Naive thymus-derived CD4-positive, alpha-beta T cell (primary cell): ENCODE measurements at regions of chr18 and their contacts with region 1.

Region 1: GRCh38 chr18:59402432-59403090 is 43.5 kb upstream of the LMAN1 start:
- DNase-seq: peak; percentile 39 to 75 (median 61)
- ATAC-seq: peak; percentile 93
- H3K4me3 ChIP-seq: no peak overlapping the region
- H3K4me3 Mint-ChIP-seq: no peak overlapping the region
- H3K27ac ChIP-seq: no peak overlapping the region
- H3K27ac Mint-ChIP-seq: no peak overlapping the region
- H3K4me1 ChIP-seq: no peaks in the 10 kb centered on the region
- H3K4me1 Mint-ChIP-seq: peaks cover 0 to 4% (median 0%) of the 10 kb centered on the region in 7 donors
- H3K27me3 ChIP-seq: no peaks in the 10 kb centered on the region
- H3K27me3 Mint-ChIP-seq: peaks cover 0 to 10% (median 0%) of the 10 kb centered on the region in 5 donors

Region 2: GRCh38 chr18:58781627-58782194 is 620.9 kb before region 1 on chr18:
- CTCF ChIA-PET with region 1: no interaction called
- POLR2A ChIA-PET with region 1: no interaction called
- intact Hi-C with region 1: loop called in 1 of 2 experiments (anchors 2 kb)
- DNase-seq: peak; percentile 28 to 73 (median 59)
- ATAC-seq: peak; percentile 83
- H3K4me3 ChIP-seq: no peak overlapping the region
- H3K4me3 Mint-ChIP-seq: no peak overlapping the region
- H3K27ac ChIP-seq: no peak overlapping the region
- H3K27ac Mint-ChIP-seq: no peak overlapping the region
- H3K4me1 ChIP-seq: no peaks in the 10 kb centered on the region
- H3K4me1 Mint-ChIP-seq: peaks cover 0 to 2% (median 0%) of the 10 kb centered on the region in 7 donors
- H3K27me3 ChIP-seq: no peaks in the 10 kb centered on the region
- H3K27me3 Mint-ChIP-seq: peaks cover 7 to 34% (median 23%) of the 10 kb centered on the region in 5 donors

Region 3: DNA sequence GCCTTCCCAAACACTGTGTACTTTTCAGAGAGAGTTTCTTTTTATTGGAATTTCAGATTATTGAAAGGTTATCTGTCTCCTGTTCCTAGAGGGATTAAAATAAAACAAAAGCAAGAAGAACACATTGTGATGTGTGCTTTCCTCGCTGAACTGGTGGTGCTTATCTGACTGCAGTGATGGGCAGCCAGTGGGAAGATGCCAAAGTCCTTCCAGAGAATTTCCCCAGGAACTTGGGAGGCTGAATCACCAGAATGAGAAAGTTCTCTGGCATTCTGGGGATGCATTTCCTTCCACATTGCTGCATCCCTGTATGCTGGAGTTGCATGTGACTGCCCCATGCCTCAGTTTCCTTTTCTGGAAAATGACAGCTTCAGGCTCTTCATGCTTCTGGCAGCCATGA is 316.8 kb before region 1 on chr18:
- CTCF ChIA-PET with region 1: interaction called, 6 read pairs
- POLR2A ChIA-PET with region 1: no interaction called
- intact Hi-C with region 1: loop called in 1 of 2 experiments (anchors 5 kb)
- DNase-seq: no peak
- ATAC-seq: no peak
- H3K4me3 ChIP-seq: no peak overlapping the region
- H3K4me3 Mint-ChIP-seq: no peak overlapping the region
- H3K27ac ChIP-seq: no peak overlapping the region
- H3K27ac Mint-ChIP-seq: no peak overlapping the region
- H3K4me1 ChIP-seq: peaks cover 0 to 8% of the 10 kb centered on the region in 2 donors
- H3K4me1 Mint-ChIP-seq: peaks cover 3 to 18% (median 13%) of the 10 kb centered on the region in 7 donors
- H3K27me3 ChIP-seq: peaks cover 0 to 4% of the 10 kb centered on the region in 2 donors
- H3K27me3 Mint-ChIP-seq: peaks cover 12 to 22% (median 20%) of the 10 kb centered on the region in 5 donors

Region 4: DNA sequence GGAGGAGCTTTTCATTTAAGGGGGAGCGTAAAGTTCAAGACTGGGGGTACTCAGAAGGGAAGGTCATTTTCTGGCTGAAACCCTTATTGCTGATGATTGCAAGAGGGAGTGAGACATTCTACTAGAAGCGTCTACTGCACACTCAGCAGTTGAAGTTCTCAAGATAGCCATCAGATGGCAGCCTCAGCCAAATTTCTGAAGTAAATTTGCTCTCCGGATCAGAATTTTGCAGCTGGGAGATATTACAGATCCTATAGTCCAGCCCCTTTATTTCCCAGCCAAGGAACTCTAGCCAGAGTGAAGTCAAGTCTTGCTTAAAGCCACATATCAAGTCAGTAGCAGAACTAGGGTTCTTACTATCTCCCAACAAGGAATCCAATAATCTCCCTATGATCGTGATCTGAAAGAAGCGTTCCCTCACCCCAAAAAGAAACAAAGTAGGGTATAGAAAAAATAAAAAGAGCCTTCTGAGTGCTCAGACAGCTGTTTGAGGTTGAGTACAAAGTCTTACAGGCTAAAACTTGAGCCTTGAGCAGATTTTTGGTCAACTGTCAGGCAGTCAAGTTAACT is 153.3 kb before region 1 on chr18:
- CTCF ChIA-PET with region 1: interaction called, 3 read pairs
- POLR2A ChIA-PET with region 1: no interaction called
- intact Hi-C with region 1: loop called in 1 of 2 experiments (anchors 2 kb)
- DNase-seq: peak in 3 of 9 donors; percentile 9 to 17 (median 16)
- ATAC-seq: no peak
- H3K4me3 ChIP-seq: no peak overlapping the region
- H3K4me3 Mint-ChIP-seq: no peak overlapping the region
- H3K27ac ChIP-seq: no peak overlapping the region
- H3K27ac Mint-ChIP-seq: no peak overlapping the region
- H3K4me1 ChIP-seq: no peaks in the 10 kb centered on the region
- H3K4me1 Mint-ChIP-seq: peaks cover 0 to 2% (median 0%) of the 10 kb centered on the region in 7 donors
- H3K27me3 ChIP-seq: no peaks in the 10 kb centered on the region
- H3K27me3 Mint-ChIP-seq: peaks cover 49 to 67% (median 63%) of the 10 kb centered on the region in 5 donors

Region 5: DNA sequence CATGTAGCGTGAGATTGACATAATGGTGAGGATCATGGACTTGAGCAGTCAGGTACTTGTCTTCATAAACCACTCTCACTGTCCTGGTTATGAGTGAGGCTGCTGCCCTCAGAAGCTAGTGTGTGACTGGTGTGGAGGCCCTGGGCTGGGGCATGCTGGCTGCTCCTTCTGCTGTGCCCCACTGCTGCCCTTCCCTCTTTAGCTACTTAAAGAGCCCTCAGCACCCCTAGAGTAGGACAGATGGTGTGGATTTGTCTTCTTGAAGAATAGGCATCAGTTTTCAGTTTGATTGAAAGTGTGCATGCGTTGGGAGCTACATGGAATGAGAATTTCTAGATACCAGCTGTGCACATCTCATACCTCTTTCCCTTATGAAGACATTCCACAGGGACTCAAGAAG is 99.6 kb before region 1 on chr18:
- CTCF ChIA-PET with region 1: interaction called, 68 read pairs
- POLR2A ChIA-PET with region 1: no interaction called
- intact Hi-C with region 1: loop called in 1 of 2 experiments (anchors 2 kb)
- DNase-seq: no peak
- ATAC-seq: no peak
- H3K4me3 ChIP-seq: no peak overlapping the region
- H3K4me3 Mint-ChIP-seq: no peak overlapping the region
- H3K27ac ChIP-seq: no peak overlapping the region
- H3K27ac Mint-ChIP-seq: no peak overlapping the region
- H3K4me1 ChIP-seq: no peaks in the 10 kb centered on the region
- H3K4me1 Mint-ChIP-seq: peaks cover 0 to 4% (median 0%) of the 10 kb centered on the region in 7 donors
- H3K27me3 ChIP-seq: no peaks in the 10 kb centered on the region
- H3K27me3 Mint-ChIP-seq: peaks cover 14 to 33% (median 28%) of the 10 kb centered on the region in 5 donors

Region 6: DNA sequence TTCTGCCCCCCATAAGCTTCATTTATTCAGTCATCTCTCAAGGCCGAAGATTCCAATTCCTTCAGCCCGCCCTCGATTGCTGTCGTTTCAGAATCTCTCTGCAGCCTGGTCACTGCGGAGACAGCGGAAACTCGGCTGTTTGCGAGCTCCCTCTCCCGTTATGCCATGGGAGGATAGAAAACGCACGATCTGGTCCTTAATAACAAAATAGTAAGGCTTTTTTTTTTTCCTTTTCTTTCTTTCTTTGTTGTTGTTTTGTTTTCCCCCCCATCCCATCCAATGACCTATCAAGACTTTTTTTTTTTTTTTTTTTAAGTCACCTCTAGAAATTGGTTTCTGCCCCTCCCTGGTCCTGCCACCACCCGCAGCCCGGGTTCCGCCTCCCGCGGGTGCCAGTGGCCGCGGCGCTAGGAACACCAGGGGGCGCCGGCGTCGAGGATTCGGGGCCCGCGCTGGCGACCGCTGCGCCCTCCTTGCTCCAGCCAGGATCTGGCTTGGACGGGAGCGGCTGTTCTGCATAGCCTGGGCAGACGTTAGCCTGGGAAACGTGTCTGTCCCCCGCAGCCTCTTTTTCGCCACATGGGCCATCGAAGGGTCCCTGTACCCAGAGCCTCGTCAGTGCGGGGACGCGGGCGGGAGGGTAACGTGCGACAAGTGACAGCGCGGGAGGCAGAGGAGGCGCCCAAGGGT is 94.2 kb before region 1 on chr18:
- CTCF ChIA-PET with region 1: interaction called, 68 read pairs
- POLR2A ChIA-PET with region 1: no interaction called
- intact Hi-C with region 1: loop called in 1 of 2 experiments (anchors 2 kb)
- DNase-seq: peak; percentile 23 to 84 (median 57)
- ATAC-seq: peak; percentile 89
- H3K4me3 ChIP-seq: peak overlapping the region; percentile 56
- H3K4me3 Mint-ChIP-seq: peak overlapping the region in 9 of 10 donors; percentile 23 to 76 (median 61)
- H3K27ac ChIP-seq: no peak overlapping the region
- H3K27ac Mint-ChIP-seq: peak overlapping the region in 1 of 9 donors; percentile 44
- H3K4me1 ChIP-seq: peaks cover 0 to 4% of the 10 kb centered on the region in 2 donors
- H3K4me1 Mint-ChIP-seq: peaks cover 0 to 3% (median 0%) of the 10 kb centered on the region in 7 donors
- H3K27me3 ChIP-seq: peaks cover 0 to 10% of the 10 kb centered on the region in 2 donors
- H3K27me3 Mint-ChIP-seq: peaks cover 30 to 65% (median 52%) of the 10 kb centered on the region in 5 donors

Region 7: DNA sequence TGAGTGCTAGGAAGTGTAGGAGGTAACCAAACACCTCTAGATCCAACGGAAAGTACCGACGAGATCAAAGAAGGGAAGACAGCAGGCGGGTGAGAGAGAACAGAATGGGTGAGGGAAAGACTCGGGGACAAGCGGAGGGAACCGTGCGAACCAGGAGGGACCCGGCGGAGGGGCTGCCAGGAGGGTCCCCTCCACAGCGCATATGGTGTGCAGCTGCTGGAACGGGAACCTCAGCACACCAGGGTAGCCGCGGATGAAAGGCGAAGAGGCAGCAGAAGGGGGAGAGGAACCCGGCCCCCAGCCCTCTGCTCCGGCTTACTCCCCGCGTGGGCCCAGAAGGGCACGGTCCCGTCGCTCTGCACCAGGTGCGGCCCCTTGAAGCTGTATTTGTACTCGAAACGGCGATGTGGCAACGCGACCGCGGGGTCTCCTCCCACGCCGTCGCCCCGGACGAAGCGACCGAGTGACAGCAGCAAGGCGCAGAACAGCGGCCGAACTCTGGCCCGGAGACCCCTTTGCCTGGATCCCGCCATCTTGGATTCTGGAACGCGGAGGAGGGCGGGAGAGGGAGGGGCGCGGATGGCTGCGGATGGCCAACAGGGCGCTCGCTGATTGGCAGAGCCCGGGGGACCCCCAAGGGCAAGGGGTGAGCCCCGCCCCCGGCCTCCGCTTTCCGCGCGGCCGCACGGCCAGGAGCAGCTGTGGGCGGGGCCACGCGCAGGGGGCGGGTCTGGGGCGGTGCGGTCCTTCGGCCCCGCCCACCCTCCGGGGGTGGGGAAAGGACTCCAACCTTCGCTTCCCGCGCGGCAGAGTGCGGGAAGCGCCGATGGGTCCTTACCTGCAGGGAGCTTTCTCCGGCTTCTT is 43.6 kb before region 1 on chr18 and contains the start of gene LMAN1:
- CTCF ChIA-PET with region 1: interaction called, 3 read pairs
- POLR2A ChIA-PET with region 1: no interaction called
- intact Hi-C with region 1: loop called (anchors 2 kb)
- DNase-seq: peak; percentile 73 to 98 (median 83)
- ATAC-seq: peak; percentile 97
- H3K4me3 ChIP-seq: peak within 1 kb of the TSS; percentile 81
- H3K4me3 Mint-ChIP-seq: peak within 1 kb of the TSS; percentile 88 to 99 (median 96)
- H3K27ac ChIP-seq: peak within 1 kb of the TSS; percentile 86
- H3K27ac Mint-ChIP-seq: peak within 1 kb of the TSS; percentile 90 to 98 (median 93)
- H3K4me1 ChIP-seq: peaks cover 3 to 20% of the 10 kb centered on the region in 2 donors
- H3K4me1 Mint-ChIP-seq: peaks cover 11 to 45% (median 39%) of the 10 kb centered on the region in 7 donors
- H3K27me3 ChIP-seq: no peaks in the 10 kb centered on the region
- H3K27me3 Mint-ChIP-seq: peaks cover 0 to 9% (median 0%) of the 10 kb centered on the region in 5 donors
- total RNA-seq, gene LMAN1: 34.6 to 120 (median 46.3) TPM

Region 8: DNA sequence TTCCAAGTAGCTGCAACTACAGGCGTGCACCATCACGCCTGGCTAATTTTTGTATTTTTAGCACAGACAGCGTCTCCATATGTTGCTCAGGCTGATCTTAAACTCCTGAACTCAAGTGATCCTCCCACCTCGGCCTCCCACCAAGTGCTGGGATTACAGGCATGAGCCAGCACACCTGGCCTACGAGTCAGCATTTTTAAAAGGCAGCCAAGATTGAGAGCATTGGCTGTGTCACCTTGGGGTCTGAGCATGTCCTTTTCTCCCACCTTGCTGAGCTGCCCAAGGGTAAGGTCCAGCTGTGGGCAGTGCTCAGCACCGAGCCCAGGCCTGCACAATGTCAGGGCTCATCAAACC is 99.3 kb after region 1 on chr18:
- CTCF ChIA-PET with region 1: no interaction called
- POLR2A ChIA-PET with region 1: no interaction called
- intact Hi-C with region 1: no loop called
- DNase-seq: no peak
- ATAC-seq: no peak
- H3K4me3 ChIP-seq: no peak overlapping the region
- H3K4me3 Mint-ChIP-seq: no peak overlapping the region
- H3K27ac ChIP-seq: no peak overlapping the region
- H3K27ac Mint-ChIP-seq: no peak overlapping the region
- H3K4me1 ChIP-seq: no peaks in the 10 kb centered on the region
- H3K4me1 Mint-ChIP-seq: no peaks in the 10 kb centered on the region
- H3K27me3 ChIP-seq: no peaks in the 10 kb centered on the region
- H3K27me3 Mint-ChIP-seq: peaks cover 4 to 24% (median 19%) of the 10 kb centered on the region in 5 donors